ENCODE measurements at regions of chr16 and their contacts with region 1.

Region 1: GRCh38 chr16:67435758-67436164 is 4.8 kb downstream of the HSD11B2 start:
- DNase-seq: no peak
- ATAC-seq: no peak
- H3K4me3 Mint-ChIP-seq: no peak overlapping the region
- H3K27ac Mint-ChIP-seq: no peak overlapping the region
- H3K4me1 Mint-ChIP-seq: peaks cover 25% of the 10 kb centered on the region
- H3K27me3 Mint-ChIP-seq: no peaks in the 10 kb centered on the region
- CTCF ChIP-seq: no peak

Region 2: GRCh38 chr16:67470359-67470758 is 34.6 kb after region 1 on chr16:
- CTCF ChIA-PET with region 1: interaction called, 16 read pairs
- POLR2A ChIA-PET with region 1: no interaction called
- DNase-seq: no peak
- ATAC-seq: no peak
- H3K4me3 Mint-ChIP-seq: no peak overlapping the region
- H3K27ac Mint-ChIP-seq: no peak overlapping the region
- H3K4me1 Mint-ChIP-seq: peaks cover 3% of the 10 kb centered on the region
- H3K27me3 Mint-ChIP-seq: no peaks in the 10 kb centered on the region; the same call in 1 of the 2 replicates
- CTCF ChIP-seq: no peak

Measured in WTC11 (cell line).